CD8-positive, alpha-beta T cell (primary cell): ENCODE measurements at regions of chr14 and their contacts with region 1.

Region 1: GRCh38 chr14:64986578-64987571 is at the start of gene FNTB:
- DNase-seq: peak; percentile 85 to 98 (median 93)
- ATAC-seq: peak; percentile 89
- H3K4me3 ChIP-seq: peak within 1 kb of the TSS; percentile 78 to 79
- H3K4me3 Mint-ChIP-seq: peak within 1 kb of the TSS; percentile 99
- H3K27ac ChIP-seq: peak within 1 kb of the TSS; percentile 57 to 73
- H3K27ac Mint-ChIP-seq: peak within 1 kb of the TSS; percentile 98
- H3K4me1 ChIP-seq: peaks cover 44% of the 10 kb centered on the region
- H3K4me1 Mint-ChIP-seq: peaks cover 55% of the 10 kb centered on the region
- H3K27me3 ChIP-seq: no peaks in the 10 kb centered on the region
- H3K27me3 Mint-ChIP-seq: peaks cover 7% of the 10 kb centered on the region
- CTCF ChIP-seq: peak; percentile 68
- total RNA-seq, gene FNTB: 6.3 to 7.7 TPM

Region 2: DNA sequence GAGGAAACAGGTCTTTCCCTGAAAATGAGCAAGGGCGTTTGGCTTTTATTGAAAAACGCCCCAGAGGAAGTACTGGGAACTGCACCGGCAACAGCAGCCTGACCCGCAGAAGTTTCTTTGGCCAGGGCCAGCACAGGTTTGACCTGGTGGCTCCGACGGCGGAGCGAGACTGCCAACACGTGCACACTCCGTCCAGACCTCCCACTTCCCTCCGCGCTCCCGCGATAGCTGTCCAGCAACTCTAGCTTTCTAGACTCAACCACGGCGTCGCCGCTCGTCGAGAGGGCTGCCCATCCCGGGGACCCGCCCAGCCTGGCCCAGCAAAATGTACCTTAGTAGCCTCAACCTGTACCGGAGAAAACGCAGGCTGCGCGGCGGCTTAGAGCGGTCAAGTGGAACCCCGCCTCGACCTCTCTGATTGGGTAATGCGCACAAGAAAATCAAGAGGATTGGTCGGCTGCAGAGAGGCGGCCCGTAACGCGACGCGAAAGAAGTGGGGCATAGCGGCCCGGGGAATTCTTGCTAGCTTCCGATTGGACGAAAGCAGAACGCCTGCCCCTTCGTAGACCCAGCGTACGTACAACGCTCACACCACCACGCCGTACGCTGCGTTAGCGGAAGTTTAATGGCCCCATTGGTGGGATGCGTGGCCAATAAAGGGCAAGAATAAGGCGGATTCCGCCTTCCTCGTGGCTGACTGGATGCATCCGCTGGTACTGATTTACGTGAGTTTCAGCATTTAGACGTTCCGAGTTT is 1345.2 kb before region 1 on chr14 and contains the start of gene WDR89:
- CTCF ChIA-PET with region 1: no interaction called
- POLR2A ChIA-PET with region 1: no interaction called
- intact Hi-C with region 1: loop called in 1 of 2 experiments (anchors 10 kb)
- DNase-seq: peak; percentile 91 to 100 (median 94)
- ATAC-seq: peak; percentile 85
- H3K4me3 ChIP-seq: peak within 1 kb of the TSS; percentile 85 to 89
- H3K4me3 Mint-ChIP-seq: peak within 1 kb of the TSS; percentile 87
- H3K27ac ChIP-seq: peak within 1 kb of the TSS; percentile 94 to 99
- H3K27ac Mint-ChIP-seq: peak within 1 kb of the TSS; percentile 96
- H3K4me1 ChIP-seq: peaks cover 30% of the 10 kb centered on the region
- H3K4me1 Mint-ChIP-seq: peaks cover 57% of the 10 kb centered on the region
- H3K27me3 ChIP-seq: no peaks in the 10 kb centered on the region
- H3K27me3 Mint-ChIP-seq: no peaks in the 10 kb centered on the region
- CTCF ChIP-seq: peak; percentile 72
- total RNA-seq, gene WDR89: 13.6 to 13.7 TPM

Region 3: DNA sequence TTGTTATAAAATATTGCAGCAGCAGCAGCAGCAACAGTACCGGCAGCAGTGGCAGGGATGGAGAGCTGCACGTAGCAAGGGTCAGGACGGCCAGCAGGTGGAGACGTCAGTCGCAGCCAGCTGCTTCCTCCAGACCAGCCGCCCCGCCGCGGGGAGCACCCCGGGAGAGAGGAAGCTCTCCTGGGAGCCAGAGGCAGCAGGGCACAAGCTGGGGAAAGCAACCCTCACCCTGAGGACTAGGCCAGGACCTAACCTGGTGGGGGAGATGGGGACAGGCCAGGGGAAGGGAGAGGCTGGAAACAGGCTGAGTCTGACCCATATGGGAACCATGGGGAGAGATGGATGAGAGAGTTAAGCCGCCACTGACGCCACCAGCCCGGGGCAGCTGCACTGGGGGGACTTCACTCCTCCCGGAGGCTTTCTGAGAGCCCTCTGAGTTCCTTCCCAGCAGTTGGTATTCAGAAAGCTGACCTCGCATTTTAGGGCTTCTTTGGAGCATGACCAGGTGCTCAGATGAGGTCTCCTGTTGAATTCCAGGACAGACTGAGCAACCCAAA is 163.5 kb before region 1 on chr14:
- CTCF ChIA-PET with region 1: interaction called, 36 read pairs
- POLR2A ChIA-PET with region 1: no interaction called
- intact Hi-C with region 1: loop called in 1 of 2 experiments (anchors 1 kb)
- DNase-seq: peak; percentile 22 to 77 (median 62)
- ATAC-seq: peak; percentile 89
- H3K4me3 ChIP-seq: no peak overlapping the region
- H3K4me3 Mint-ChIP-seq: no peak overlapping the region
- H3K27ac ChIP-seq: no peak overlapping the region
- H3K27ac Mint-ChIP-seq: no peak overlapping the region
- H3K4me1 ChIP-seq: no peaks in the 10 kb centered on the region
- H3K4me1 Mint-ChIP-seq: peaks cover 6% of the 10 kb centered on the region
- H3K27me3 ChIP-seq: peaks cover 0 to 6% of the 10 kb centered on the region in 2 experiments
- H3K27me3 Mint-ChIP-seq: peaks cover 8% of the 10 kb centered on the region
- CTCF ChIP-seq: peak; percentile 75

Region 4: GRCh38 chr14:64971943-64972791 is 14.7 kb before region 1 on chr14 and contains the start of gene RAB15:
- CTCF ChIA-PET with region 1: interaction called, 8 read pairs
- POLR2A ChIA-PET with region 1: interaction called, 12 read pairs
- intact Hi-C with region 1: loop called in 1 of 2 experiments (anchors 1 kb)
- DNase-seq: peak in 8 of 9 experiments; percentile 7 to 67 (median 46)
- ATAC-seq: peak; percentile 68
- H3K4me3 ChIP-seq: peak within 1 kb of the TSS; percentile 54 to 73
- H3K4me3 Mint-ChIP-seq: peak within 1 kb of the TSS; percentile 83
- H3K27ac ChIP-seq: no peak within 1 kb of the TSS
- H3K27ac Mint-ChIP-seq: peak within 1 kb of the TSS; percentile 62
- H3K4me1 ChIP-seq: peaks cover 16% of the 10 kb centered on the region
- H3K4me1 Mint-ChIP-seq: peaks cover 27% of the 10 kb centered on the region
- H3K27me3 ChIP-seq: no peaks in the 10 kb centered on the region
- H3K27me3 Mint-ChIP-seq: no peaks in the 10 kb centered on the region
- CTCF ChIP-seq: no peak
- total RNA-seq, gene RAB15: 2.9 to 3.6 TPM

Region 5: DNA sequence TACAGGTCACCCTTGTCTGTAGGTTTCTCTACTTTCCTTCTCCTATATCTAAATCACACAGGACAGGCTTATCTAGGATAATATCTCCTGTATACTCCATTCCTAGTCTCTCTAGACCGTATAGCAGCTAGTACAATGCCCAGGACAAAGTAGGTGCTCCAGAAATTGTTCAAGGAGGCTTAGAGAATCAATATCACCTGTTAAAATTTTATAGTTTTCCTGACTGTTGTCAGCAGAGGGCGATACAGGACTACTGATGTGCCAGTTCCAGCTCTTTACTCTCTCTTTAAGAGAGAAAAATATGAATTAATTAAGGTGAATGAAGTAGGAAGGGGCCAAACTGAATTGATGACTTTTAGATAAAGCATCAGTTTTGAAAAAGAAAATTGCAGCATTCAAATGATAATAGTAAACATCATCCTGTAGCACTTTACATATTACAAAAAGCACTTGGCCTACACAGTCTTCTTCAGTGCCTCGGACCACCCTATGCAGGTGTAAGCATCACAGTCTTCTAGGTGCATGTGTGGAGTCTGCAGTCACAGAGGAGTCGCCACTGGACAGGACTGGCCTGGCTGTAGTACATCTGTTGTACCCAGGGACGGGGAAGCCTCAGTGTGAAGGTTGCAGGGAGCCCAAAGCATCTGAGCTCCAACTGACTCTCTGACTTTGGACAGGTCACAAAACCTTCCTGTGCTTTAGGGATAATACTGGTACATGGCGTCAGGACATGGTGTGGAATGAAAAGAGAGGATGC is 177.4 kb after region 1 on chr14:
- CTCF ChIA-PET with region 1: no interaction called
- POLR2A ChIA-PET with region 1: no interaction called
- intact Hi-C with region 1: loop called in 1 of 2 experiments (anchors 2 kb)
- DNase-seq: peak in 6 of 9 experiments; percentile 5 to 69 (median 37)
- ATAC-seq: peak; percentile 48
- H3K4me3 ChIP-seq: no peak overlapping the region
- H3K4me3 Mint-ChIP-seq: no peak overlapping the region
- H3K27ac ChIP-seq: no peak overlapping the region
- H3K27ac Mint-ChIP-seq: no peak overlapping the region
- H3K4me1 ChIP-seq: no peaks in the 10 kb centered on the region
- H3K4me1 Mint-ChIP-seq: no peaks in the 10 kb centered on the region
- H3K27me3 ChIP-seq: no peaks in the 10 kb centered on the region
- H3K27me3 Mint-ChIP-seq: no peaks in the 10 kb centered on the region
- CTCF ChIP-seq: peak; percentile 76

Region 6: GRCh38 chr14:66070509-66071319 is 1083.8 kb after region 1 on chr14:
- CTCF ChIA-PET with region 1: no interaction called
- POLR2A ChIA-PET with region 1: no interaction called
- intact Hi-C with region 1: loop called (anchors 2 to 5 kb)
- DNase-seq: peak; percentile 47 to 86 (median 73)
- ATAC-seq: peak; percentile 89
- H3K4me3 ChIP-seq: no peak overlapping the region
- H3K4me3 Mint-ChIP-seq: no peak overlapping the region
- H3K27ac ChIP-seq: no peak overlapping the region
- H3K27ac Mint-ChIP-seq: no peak overlapping the region
- H3K4me1 ChIP-seq: no peaks in the 10 kb centered on the region
- H3K4me1 Mint-ChIP-seq: peaks cover 2% of the 10 kb centered on the region
- H3K27me3 ChIP-seq: no peaks in the 10 kb centered on the region
- H3K27me3 Mint-ChIP-seq: no peaks in the 10 kb centered on the region
- CTCF ChIP-seq: peak; percentile 99